ENCODE measurements at regions of chr13 and their contacts with region 1.

Region 1: GRCh38 chr13:51435002-51435578 is 17.7 kb downstream of the INTS6 start:
- DNase-seq: no peak
- ATAC-seq: no peak
- H3K4me3 ChIP-seq: no peak overlapping the region
- H3K27ac ChIP-seq: no peak overlapping the region
- H3K4me1 ChIP-seq: peaks cover 0 to 5% (median 0%) of the 10 kb centered on the region in 12 donors
- H3K27me3 ChIP-seq: no peaks in the 10 kb centered on the region
- CTCF ChIP-seq: peak; percentile 21 to 69 (median 51)
- POLR2A ChIP-seq: no peak

Region 2: DNA sequence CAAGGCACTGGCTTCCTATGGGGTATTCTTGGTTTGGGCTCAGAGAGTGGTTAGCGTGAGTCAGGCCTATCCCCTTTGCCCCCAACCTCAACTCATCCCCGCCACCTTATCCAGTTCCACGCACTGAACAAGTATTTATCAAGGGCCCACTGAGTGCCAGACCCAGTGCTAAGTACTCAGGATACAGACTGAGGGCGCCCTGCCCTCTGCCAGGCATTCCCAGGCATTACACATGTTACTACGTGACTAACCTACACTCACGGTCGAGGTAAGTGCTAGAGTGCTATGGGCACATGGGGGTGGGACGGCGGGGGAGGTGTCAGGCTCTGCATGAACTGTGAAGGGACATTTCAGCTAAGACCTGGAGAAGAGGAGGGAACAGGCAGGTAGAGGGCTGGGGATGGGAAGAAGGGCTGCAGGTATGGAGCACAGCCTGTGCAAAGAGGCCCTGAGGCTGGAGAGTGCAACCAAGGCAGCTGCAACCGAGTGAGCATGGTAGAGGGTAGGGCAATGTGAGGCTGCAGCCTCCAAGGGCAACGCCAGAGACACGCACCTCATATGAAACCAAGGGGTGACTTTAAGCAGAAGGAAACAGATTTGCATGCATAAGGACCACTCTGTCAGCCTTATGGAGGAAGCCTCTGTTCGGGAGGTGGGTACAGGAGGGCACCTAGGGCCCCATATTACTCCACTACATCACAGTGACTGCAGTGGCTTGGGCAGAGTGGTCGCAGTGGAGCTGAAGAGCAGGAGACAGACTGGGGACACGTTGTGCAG is 346.3 kb after region 1 on chr13:
- intact Hi-C with region 1: loop called in 1 of 10 experiments (anchors 5 kb)
- DNase-seq: peak in 1 of 5 donors; percentile 43
- ATAC-seq: peak; percentile 26 to 60 (median 56)
- H3K4me3 ChIP-seq: no peak overlapping the region
- H3K27ac ChIP-seq: no peak overlapping the region
- H3K4me1 ChIP-seq: peaks cover 0 to 16% (median 10%) of the 10 kb centered on the region in 12 donors
- H3K27me3 ChIP-seq: no peaks in the 10 kb centered on the region
- CTCF ChIP-seq: peak in 5 of 12 donors; percentile 16 to 35 (median 24)
- POLR2A ChIP-seq: no peak

Region 3: DNA sequence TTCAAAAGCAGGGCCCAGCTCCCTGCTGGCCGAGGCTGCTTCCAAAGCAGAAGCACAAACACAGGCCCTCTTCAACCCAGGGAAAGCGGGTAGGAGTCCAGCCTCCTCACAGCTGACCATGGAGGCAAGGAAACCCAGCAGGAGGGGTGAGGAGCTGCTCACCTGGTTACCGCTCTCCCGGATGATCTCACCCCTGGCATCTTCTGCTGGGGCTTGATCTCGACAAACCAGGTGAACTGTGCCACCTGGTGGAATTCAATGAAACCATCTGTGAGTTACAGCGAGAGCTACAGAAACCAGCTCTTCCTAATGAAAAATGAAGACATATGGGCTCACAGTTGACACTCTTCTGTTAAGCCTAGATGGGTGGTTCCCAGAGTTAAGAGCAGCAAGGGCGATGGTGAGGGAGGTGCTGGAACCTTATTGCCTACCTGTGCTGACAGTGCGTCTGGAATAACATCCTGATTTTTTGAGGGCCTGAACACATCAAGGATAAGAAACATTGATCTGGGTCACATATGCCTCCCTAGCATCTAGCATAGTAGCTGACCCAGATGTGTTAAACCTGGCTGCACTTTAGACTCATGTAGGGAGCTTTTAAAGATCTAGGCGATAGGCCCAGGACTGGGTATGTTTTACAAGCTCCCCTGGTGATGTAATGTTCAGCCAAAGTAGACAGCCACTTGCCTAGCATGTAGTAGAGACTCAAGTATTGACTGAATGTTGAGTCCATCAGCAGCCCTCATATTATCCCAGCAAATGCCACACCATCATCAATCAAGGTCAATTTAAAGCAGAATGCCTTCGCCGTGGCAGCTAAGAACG is 362.8 kb after region 1 on chr13:
- intact Hi-C with region 1: loop called in 2 of 10 experiments (anchors 5 to 10 kb)
- DNase-seq: peak in 1 of 5 donors; percentile 45
- ATAC-seq: peak in 1 of 4 donors; percentile 2
- H3K4me3 ChIP-seq: no peak overlapping the region
- H3K27ac ChIP-seq: no peak overlapping the region
- H3K4me1 ChIP-seq: peaks cover 4 to 34% (median 22%) of the 10 kb centered on the region in 12 donors
- H3K27me3 ChIP-seq: no peaks in the 10 kb centered on the region
- CTCF ChIP-seq: peak in 10 of 12 donors; percentile 23 to 48 (median 36)
- POLR2A ChIP-seq: no peak

Region 4: GRCh38 chr13:51874651-51875050 is 439.6 kb after region 1 on chr13:
- intact Hi-C with region 1: no loop called
- DNase-seq: no peak
- ATAC-seq: no peak
- H3K4me3 ChIP-seq: no peak overlapping the region
- H3K27ac ChIP-seq: no peak overlapping the region
- H3K4me1 ChIP-seq: peaks cover 0 to 5% (median 0%) of the 10 kb centered on the region in 12 donors
- H3K27me3 ChIP-seq: no peaks in the 10 kb centered on the region
- CTCF ChIP-seq: no peak
- POLR2A ChIP-seq: no peak

Measured in heart left ventricle (tissue), 16 donors.